Naive thymus-derived CD8-positive, alpha-beta T cell (primary cell): ENCODE measurements at regions of chr5 and their contacts with region 1.

Region 1: DNA sequence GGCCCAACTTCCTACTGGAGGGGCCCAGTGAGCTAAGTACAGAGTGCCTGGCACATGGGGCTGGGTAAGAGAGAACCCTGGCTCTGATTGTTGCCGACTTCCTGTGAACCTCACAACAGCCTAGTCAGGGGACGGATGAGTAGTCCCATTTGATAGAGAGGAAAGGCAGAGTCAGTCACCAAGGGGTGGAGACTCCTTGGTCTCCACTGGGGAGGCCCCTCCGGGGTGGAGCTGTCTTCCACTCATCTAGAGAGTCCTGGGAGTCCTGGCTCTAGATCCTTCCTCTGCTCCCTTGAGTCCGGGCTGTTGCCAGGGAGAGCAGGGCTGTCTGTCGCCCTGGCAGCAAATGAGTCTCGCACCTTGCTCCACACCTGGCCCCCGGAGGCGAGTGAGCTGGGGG is 8.0 kb downstream of the GRK6 start:
- DNase-seq: peak in 1 of 10 donors; percentile 36
- ATAC-seq: peak in 1 of 2 donors; percentile 12
- H3K4me3 Mint-ChIP-seq: peak overlapping the region; percentile 49 to 81 (median 66)
- H3K27ac Mint-ChIP-seq: peak overlapping the region in 9 of 10 donors; percentile 83 to 95 (median 87)
- H3K4me1 Mint-ChIP-seq: peaks cover 21 to 90% (median 83%) of the 10 kb centered on the region in 4 donors
- H3K27me3 Mint-ChIP-seq: no peaks in the 10 kb centered on the region

Region 2: DNA sequence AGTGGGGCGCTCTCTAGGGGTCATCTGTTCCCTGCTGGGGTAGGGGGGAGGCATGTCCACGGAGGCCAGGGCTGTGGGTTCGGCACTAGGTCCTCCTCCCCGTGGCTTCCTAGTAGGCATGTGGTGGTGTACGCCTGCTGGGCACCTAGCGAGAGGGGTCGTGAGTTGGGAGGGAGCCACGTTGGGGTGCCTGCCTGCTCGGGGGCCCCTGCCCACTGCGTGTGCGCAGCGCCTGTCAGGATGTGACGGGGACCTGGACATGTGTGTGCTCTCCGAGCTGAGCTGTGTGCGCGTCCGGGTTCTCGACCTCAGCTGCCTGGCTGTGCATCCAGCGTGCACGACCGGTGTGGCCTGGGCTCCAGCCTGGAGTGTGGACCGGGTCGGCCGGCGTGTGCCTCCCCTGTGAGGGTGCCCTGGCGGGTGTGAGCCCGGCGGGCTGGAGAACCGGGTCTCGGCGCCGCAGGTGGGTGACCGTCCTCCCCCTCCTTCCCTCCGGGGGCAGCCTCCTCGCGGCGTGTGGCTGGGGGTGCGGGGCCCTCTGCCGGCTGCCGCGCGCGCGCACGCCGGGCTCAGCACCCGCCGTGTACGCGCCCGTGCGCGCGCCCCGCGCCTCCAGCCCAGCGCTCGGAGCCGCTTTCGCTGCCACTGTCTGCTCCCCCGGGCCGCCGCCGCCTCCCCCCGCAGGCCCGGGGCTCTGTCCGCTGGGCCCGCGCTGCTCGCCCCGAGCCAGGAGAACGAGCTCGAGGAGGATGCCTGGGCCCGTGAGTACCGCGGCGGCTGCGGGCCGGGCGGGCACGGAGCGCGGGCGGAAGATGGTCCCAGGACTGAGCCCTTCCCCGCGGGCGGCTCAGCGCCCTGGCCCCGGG is 12.0 kb after region 1 on chr5 and contains the start of gene PRR7:
- POLR2A ChIA-PET with region 1: interaction called, 1,530 read pairs
- DNase-seq: peak; percentile 60 to 86 (median 78)
- ATAC-seq: peak; percentile 49 to 53
- H3K4me3 Mint-ChIP-seq: peak within 1 kb of the TSS; percentile 76 to 89 (median 82)
- H3K27ac Mint-ChIP-seq: peak within 1 kb of the TSS; percentile 91 to 98 (median 96)
- H3K4me1 Mint-ChIP-seq: peaks cover 28 to 60% (median 48%) of the 10 kb centered on the region in 4 donors
- H3K27me3 Mint-ChIP-seq: no peaks in the 10 kb centered on the region
- polyA plus RNA-seq, gene PRR7: 14.6 to 21.6 (median 20.6) TPM

Region 3: DNA sequence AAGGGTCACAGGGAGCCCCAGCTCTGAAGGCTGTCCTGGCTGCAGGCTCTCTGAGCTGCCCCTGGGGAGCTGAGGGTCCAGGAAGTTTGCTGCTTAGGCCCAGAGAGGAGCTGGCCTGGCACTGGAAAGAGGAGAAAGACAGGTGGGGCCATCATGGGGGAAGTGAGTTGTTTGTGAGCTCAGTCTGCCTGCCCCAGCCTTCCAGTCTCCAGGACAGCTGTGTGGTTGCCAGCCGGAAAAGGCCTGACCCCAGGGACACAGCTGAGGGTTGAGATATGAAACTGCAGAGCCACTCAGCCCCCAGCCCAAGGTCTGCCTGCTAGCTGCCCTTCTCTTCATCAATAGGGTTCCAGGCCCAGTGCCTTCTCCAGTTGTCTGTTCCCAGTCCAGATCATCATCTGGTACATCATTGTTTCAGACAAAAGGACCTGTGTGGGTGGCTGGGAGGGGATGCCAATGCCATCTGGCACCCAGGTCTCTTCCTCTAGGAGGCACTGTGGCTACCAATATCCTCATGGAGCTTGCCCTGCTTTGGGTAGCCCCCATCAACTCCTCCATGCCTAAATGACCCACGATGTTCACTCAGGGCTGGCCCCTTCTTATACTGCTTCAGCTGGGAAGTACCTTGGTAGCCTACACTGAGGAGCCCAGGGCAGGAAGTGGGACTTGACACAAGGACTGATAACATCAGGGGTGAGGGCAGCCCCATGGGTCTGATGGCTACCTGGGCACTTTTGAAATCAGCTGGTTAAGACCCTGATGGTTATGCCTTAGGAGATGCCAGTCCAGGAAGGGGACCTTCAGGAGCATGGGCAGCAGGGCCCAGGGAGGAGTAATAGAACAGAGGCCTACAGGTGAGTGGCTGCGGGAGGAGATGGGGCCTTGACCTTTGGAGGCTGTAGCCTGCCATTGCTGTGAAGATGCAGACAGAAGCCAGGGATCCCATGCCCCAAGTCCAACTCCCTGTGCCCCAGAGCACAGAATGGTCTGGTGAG is 86.8 kb after region 1 on chr5:
- POLR2A ChIA-PET with region 1: no interaction called
- DNase-seq: no peak
- ATAC-seq: no peak
- H3K4me3 Mint-ChIP-seq: peak overlapping the region in 1 of 10 donors; percentile 36
- H3K27ac Mint-ChIP-seq: peak overlapping the region in 9 of 10 donors; percentile 1 to 84 (median 63)
- H3K4me1 Mint-ChIP-seq: peaks cover 24 to 44% (median 41%) of the 10 kb centered on the region in 4 donors
- H3K27me3 Mint-ChIP-seq: no peaks in the 10 kb centered on the region